Cardiac septum (tissue), 1 donor: ENCODE measurements at regions of chr9 and their contacts with region 1.

Region 1: GRCh38 chr9:70413798-70414775 is at the start of gene KLF9:
- DNase-seq: peak; percentile 96
- total RNA-seq, gene KLF9: 19.0 TPM

Region 2: GRCh38 chr9:70258692-70259511 is 155.2 kb before region 1 on chr9 and contains the start of gene SMC5:
- intact Hi-C with region 1: loop called (anchors 5 kb)
- DNase-seq: peak; percentile 96
- total RNA-seq, gene SMC5: 15.0 TPM

Region 3: DNA sequence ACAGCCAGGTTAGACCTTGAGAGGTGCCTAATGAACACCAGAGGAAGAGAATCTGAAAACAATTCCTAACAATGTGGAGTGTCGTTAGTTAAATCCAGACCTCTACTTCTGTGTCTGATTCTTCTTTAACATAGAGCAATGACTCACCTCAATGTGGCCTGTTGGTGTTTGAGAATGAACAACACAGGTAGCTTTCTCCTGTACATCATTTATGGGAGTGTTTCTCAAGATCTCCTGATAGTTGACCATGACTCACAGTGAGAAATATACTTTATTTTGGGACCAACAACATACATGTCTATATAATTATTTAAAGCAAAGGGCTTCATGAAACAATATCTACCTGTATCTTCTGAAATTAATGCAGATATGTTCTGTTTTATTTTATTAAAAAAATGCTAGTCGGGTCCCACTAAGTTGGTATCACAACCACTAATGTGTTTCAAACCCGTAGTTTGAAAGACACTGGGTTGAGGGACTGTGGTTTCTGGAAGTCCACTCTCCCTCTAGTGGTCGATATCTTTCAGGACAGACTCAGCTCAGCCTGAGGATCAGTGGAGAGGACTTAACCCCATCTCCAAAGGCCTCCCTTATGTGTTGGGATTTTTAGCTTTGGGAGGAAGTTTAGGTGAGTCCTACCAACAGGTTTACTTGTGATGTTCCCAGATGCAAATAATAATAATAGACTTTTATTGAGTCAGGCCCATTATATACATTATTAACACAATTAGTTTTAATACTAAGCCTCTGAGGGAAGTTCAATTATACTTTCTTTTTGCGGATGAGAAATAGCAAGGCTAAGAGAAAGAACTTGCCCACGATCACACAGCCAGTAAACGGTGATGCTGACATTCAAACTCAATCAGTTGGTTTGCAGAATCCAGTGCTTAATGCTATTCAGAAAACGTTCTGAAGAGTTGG is 70.4 kb after region 1 on chr9:
- intact Hi-C with region 1: loop called (anchors 1 kb)
- DNase-seq: no peak

Region 4: GRCh38 chr9:70587201-70587600 is 173.1 kb after region 1 on chr9:
- intact Hi-C with region 1: loop called (anchors 2 kb)
- DNase-seq: no peak

Region 5: GRCh38 chr9:70668751-70669150 is 254.7 kb after region 1 on chr9:
- intact Hi-C with region 1: no loop called
- DNase-seq: no peak

Region 6: DNA sequence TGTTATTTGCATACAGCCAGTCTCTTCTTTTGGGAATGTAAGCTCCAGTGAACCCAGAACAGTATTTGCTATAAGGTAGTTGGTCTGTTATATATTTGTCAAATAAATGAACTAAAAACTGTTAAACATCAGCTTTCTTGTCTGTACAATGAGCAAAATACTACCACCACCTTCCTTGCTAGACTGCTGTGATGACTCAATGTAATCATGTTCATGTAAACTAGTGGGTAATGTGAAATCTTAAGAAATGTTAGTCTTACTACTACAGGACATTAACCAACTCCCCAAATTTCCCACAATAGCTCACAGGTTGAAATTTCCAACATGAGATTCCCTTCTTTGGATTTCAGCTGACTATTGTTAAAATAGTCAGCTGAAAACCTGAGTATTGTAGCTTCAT is 531.2 kb after region 1 on chr9:
- intact Hi-C with region 1: no loop called
- DNase-seq: no peak